GM13976 (cell line): ENCODE measurements at regions of chr2 and their contacts with region 1.

Region 1: DNA sequence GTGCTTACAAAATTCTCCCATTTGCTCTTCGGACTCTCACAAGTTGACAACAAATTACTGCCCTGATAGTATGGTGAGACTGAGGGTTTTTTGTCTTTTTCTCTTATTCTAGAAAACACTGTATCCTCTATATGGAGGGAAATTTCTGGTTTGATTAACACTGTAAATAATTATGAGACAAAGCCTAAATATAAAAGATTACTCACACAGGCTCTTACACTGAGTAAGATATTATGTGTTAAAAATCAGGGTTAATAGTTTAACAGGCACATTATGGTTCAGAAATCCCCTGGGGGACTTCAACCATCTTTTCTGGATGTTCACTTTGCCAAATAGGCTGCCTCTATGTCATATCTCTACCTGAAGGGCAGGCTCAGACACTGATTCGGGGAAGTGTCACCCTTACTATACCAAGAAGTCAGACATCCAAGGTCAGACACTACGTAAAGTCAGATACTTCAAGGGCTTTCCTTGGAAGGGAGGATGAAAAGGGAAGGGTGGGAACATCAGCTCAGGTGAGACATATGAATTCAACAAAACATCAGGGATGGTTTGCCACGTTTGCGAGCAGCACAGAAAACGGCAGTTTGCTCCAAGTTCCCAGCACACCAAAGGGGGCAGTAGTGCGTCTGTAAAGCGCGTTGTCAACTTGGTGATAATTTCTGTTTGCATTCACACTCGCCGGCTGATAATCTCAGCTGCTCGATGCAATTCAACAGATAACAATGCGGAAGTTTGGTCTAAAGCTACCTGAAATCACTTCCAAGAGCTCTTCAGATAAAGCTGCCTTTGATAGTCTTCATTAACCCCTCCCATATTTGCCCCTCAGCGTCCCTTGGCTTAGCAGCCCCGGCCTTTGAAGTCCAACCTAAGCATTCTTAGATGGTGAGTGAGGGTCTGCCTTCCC is 972 bp upstream of the RASGRP3 start:
- DNase-seq: peak; percentile 68
- CTCF ChIP-seq: peak; percentile 73

Region 2: GRCh38 chr2:33577668-33578067 is 102.2 kb after region 1 on chr2:
- in situ Hi-C with region 1: loop called (anchors 10 kb)
- DNase-seq: no peak
- CTCF ChIP-seq: no peak

Region 3: GRCh38 chr2:34408100-34408499 is 932.6 kb after region 1 on chr2:
- in situ Hi-C with region 1: no loop called
- DNase-seq: no peak
- CTCF ChIP-seq: no peak